ENCODE measurements at regions of chr1 and their contacts with region 1.

Region 1: DNA sequence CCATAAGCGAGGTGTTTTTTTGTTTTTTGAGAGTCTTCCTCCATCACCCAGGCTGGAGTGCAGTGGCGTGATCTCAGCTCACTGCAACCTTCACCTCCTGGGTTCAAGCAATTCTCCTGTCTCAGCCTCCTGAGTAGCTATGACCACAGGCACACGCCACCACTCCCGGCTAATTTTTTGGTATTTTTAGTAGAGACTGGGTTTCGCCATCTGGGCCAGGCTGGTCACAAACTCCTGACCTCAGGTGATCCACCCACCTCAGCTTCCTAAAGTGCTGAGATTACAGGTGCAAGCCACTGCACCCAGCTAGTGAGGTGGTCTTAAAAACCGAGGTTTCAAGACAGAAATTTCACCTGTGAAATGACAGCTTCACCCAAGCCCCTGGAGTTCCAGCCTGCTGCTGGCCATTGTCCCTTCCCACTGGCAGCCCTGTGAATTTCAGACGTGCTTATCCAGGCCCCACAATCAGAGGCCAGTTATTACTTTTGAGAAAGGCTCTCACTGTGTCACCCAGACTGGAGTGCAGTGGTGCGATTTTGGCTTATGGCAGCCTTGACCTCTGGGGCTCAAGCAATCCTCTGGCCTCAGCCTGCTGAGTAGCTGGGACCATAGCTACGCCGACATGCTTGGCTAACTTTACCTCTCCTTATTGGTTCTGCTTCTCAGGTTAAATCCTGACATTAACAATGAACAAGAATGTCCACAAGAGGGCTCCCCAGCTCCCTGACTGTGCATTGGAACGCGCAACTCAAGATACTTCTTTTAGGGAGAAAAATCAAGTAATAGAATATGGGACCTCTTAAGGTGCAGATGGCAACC is 19.4 kb downstream of the ENO1 start:
- DNase-seq: peak; percentile 40
- H3K4me3 Mint-ChIP-seq: peak overlapping the region; percentile 46
- H3K27ac Mint-ChIP-seq: peak overlapping the region; percentile 82
- H3K4me1 Mint-ChIP-seq: peaks cover 42% of the 10 kb centered on the region
- H3K27me3 Mint-ChIP-seq: no peaks in the 10 kb centered on the region

Region 2: DNA sequence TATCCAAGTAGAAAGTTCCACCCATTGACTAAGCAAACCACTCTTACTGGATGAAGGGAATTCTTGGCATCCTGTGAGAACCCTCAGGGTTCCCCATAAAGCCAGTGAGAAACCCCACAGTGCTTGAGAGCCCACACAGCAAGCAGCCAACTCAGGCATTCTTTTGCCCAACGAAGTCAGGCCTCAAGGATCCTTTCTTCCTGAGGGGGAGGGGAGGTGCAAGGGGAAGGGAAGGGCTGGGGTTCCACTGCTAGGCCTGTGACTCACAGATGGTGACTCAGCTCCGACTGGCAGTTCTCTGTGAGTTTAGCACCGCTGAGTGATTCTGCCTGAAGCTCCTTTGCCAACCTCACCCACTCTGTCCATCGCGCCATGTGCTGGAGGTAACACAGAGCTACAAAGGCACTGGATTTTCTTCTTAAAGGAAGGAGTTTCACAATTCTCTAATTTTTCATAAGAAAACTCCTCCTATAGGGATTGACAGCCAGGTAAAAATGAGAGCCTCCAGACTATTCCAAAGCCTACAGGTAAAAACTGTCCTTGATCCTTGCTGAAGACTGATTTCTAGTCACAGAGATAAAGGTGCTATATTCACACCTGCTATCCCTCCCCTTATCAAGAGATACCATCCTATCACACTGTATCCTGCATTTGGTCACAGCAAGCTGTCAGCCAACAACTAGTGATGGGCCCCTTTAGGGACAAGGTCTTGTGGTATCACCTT is 14.6 kb after region 1 on chr1:
- intact Hi-C with region 1: loop called (anchors 2 kb)
- DNase-seq: peak; percentile 64
- H3K4me3 Mint-ChIP-seq: peak overlapping the region; percentile 99
- H3K27ac Mint-ChIP-seq: peak overlapping the region; percentile 83
- H3K4me1 Mint-ChIP-seq: peaks cover 74% of the 10 kb centered on the region
- H3K27me3 Mint-ChIP-seq: peaks cover 2% of the 10 kb centered on the region

Region 3: GRCh38 chr1:9004700-9005394 is 145.8 kb after region 1 on chr1:
- intact Hi-C with region 1: loop called (anchors 1 kb)
- DNase-seq: peak; percentile 78
- H3K4me3 Mint-ChIP-seq: no peak overlapping the region
- H3K27ac Mint-ChIP-seq: no peak overlapping the region
- H3K4me1 Mint-ChIP-seq: peaks cover 6% of the 10 kb centered on the region
- H3K27me3 Mint-ChIP-seq: peaks cover 5% of the 10 kb centered on the region

Measured in activated T-helper 1 cell treated with anti-CD3 and anti-CD28 coated beads, Interleukin-12 subunit alpha, Interleukin-12 subunit beta, Interleukin-2, Interleukin-4 antibody, amounts not matched to agents 30 ng/mL and 10 ng/mL and 1 ng/mL, durations not matched to agents 14 hours and 24 hours and 36 hours (primary cell).